Motor neuron (in vitro differentiated cells): ENCODE measurements at regions of chr16 and their contacts with region 1.

Region 1: GRCh38 chr16:46918861-46919792 is 35.0 kb downstream of the GPT2 start:
- ATAC-seq: peak in 5 of 8 experiments; percentile 35 to 58 (median 38)
- H3K4me3 ChIP-seq: no peak overlapping the region
- H3K27ac ChIP-seq: peak overlapping the region in 1 of 2 donors; percentile 65
- H3K4me1 ChIP-seq: peaks cover 0 to 6% of the 10 kb centered on the region in 2 donors

Region 2: GRCh38 chr16:46853713-46854443 is 65.2 kb before region 1 on chr16:
- in situ Hi-C with region 1: loop called in 2 of 9 experiments (anchors 10 kb)
- ATAC-seq: peak; percentile 48 to 90 (median 69)
- H3K4me3 ChIP-seq: no peak overlapping the region
- H3K27ac ChIP-seq: no peak overlapping the region
- H3K4me1 ChIP-seq: peaks cover 11 to 14% of the 10 kb centered on the region in 2 donors

Region 3: DNA sequence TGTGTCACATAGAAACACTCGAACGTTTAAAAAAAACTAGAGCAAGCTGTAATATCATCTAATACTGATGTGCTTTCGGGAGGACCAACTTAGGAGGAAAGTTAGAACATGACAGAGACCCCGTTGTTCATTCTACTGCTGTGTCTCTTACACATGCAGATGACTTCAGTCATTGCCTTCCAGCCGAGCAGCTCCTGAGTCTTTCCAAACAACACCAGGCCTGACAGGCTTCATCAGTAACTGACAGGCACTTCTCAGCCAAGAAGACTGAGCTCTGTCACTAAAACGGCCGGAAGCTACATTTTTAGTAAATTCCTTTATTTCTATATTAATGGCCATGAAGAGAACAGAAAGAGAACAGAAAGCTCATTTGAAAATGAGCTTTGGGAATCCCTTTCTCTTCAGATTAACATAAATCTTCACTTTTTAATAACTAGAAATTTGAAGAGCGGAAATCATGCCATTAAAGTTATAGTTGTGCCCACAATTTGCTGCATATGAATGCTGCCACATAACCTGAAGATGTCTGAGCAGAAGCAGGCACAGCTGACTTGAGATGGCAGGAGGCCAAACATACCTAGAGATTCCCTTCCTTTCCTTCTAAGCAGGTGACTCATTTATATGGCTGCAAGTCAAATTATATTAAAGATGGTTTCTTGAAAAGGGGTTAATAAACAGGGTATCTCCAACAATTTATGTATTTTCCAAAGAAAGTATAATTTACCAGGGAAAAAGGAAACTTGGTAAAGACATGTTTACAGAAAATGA is 392.8 kb after region 1 on chr16:
- in situ Hi-C with region 1: no loop called
- ATAC-seq: peak in 1 of 8 experiments; percentile 23
- H3K4me3 ChIP-seq: no peak overlapping the region
- H3K27ac ChIP-seq: no peak overlapping the region
- H3K4me1 ChIP-seq: peaks cover 0 to 7% of the 10 kb centered on the region in 2 donors